ENCODE measurements at regions of chr4 and their contacts with region 1.

Region 1: GRCh38 chr4:138938366-138938690 is 77.3 kb upstream of the NOCT start:
- DNase-seq: no peak
- ATAC-seq: peak; percentile 76
- H3K4me3 ChIP-seq: no peak overlapping the region
- H3K27ac ChIP-seq: no peak overlapping the region
- H3K4me1 ChIP-seq: no peaks in the 10 kb centered on the region
- H3K27me3 ChIP-seq: no peaks in the 10 kb centered on the region
- CTCF ChIP-seq: peak; percentile 23 to 40 (median 31); a peak in 4 of 6 replicates
- EP300 ChIP-seq: no peak
- POLR2A ChIP-seq: no peak
- RAD21 ChIP-seq: peak; percentile 36; the same call in 1 of the 2 replicates

Region 2: GRCh38 chr4:138775890-138776289 is 162.4 kb before region 1 on chr4:
- CTCF ChIA-PET with region 1: no interaction called
- POLR2A ChIA-PET with region 1: no interaction called
- RAD21 ChIA-PET with region 1: no interaction called
- SMC1A ChIA-PET with region 1: no interaction called
- in situ Hi-C with region 1: no loop called
- intact Hi-C with region 1: no loop called
- DNase-seq: peak; percentile 0
- ATAC-seq: peak; percentile 81
- H3K4me3 ChIP-seq: no peak overlapping the region
- H3K27ac ChIP-seq: no peak overlapping the region
- H3K4me1 ChIP-seq: no peaks in the 10 kb centered on the region
- H3K27me3 ChIP-seq: no peaks in the 10 kb centered on the region
- CTCF ChIP-seq: no peak
- EP300 ChIP-seq: no peak
- POLR2A ChIP-seq: no peak
- RAD21 ChIP-seq: no peak

Region 3: GRCh38 chr4:138948918-138949317 is 10.6 kb after region 1 on chr4:
- CTCF ChIA-PET with region 1: interaction called, 5 read pairs
- POLR2A ChIA-PET with region 1: no interaction called
- RAD21 ChIA-PET with region 1: interaction called, 3 read pairs
- SMC1A ChIA-PET with region 1: interaction called, 13 read pairs
- in situ Hi-C with region 1: no loop called
- intact Hi-C with region 1: no loop called
- DNase-seq: no peak
- ATAC-seq: no peak
- H3K4me3 ChIP-seq: no peak overlapping the region
- H3K27ac ChIP-seq: no peak overlapping the region
- H3K4me1 ChIP-seq: no peaks in the 10 kb centered on the region
- H3K27me3 ChIP-seq: no peaks in the 10 kb centered on the region
- CTCF ChIP-seq: no peak
- EP300 ChIP-seq: no peak
- POLR2A ChIP-seq: no peak
- RAD21 ChIP-seq: no peak

Measured in GM12878 (cell line).